Calu3 (cell line): ENCODE measurements at regions of chr15 and their contacts with region 1.

Region 1: GRCh38 chr15:48946088-48946839 is 17.5 kb downstream of the SHC4 start:
- DNase-seq: peak; percentile 66
- H3K4me3 Mint-ChIP-seq: no peak overlapping the region
- H3K27ac Mint-ChIP-seq: peak overlapping the region; percentile 95
- H3K4me1 Mint-ChIP-seq: peaks cover 21% of the 10 kb centered on the region
- H3K27me3 Mint-ChIP-seq: no peaks in the 10 kb centered on the region
- CTCF ChIP-seq: no peak

Region 2: DNA sequence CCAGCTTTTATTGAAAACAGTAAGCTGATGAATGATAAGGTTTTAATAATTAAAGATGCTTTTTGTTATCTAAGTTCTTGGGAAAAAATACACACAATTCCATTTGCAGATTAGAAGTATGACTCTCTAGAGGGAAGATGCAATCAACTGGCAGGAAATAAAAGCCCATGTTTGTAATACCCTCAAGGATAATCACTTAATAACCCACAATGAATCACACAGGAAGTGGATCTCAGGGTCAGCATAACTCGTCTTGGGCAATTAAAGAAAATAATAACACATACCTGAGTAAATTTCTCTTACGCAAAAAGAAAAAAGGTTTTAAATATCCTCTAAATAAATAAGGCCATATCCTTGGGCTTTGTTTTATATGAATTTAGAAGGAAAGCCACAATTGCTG is 77.7 kb before region 1 on chr15:
- CTCF ChIA-PET with region 1: interaction called, 3 read pairs
- intact Hi-C with region 1: loop called (anchors 2 kb)
- DNase-seq: no peak
- H3K4me3 Mint-ChIP-seq: no peak overlapping the region
- H3K27ac Mint-ChIP-seq: no peak overlapping the region
- H3K4me1 Mint-ChIP-seq: peaks cover 44% of the 10 kb centered on the region
- H3K27me3 Mint-ChIP-seq: no peaks in the 10 kb centered on the region
- CTCF ChIP-seq: no peak